IMR-90 (cell line): ENCODE measurements at regions of chr16 and their contacts with region 1.

Region 1: GRCh38 chr16:66650707-66651473 is 45.7 kb downstream of the CMTM4 start:
- DNase-seq: peak; percentile 80
- ATAC-seq: peak; percentile 98
- H3K4me3 ChIP-seq: peak overlapping the region; percentile 4; the same call in 1 of the 2 replicates
- H3K27ac ChIP-seq: no peak overlapping the region
- H3K4me1 ChIP-seq: peaks cover 3% of the 10 kb centered on the region; the same call in 1 of the 2 replicates
- H3K27me3 ChIP-seq: no peaks in the 10 kb centered on the region
- CTCF ChIP-seq: peak; percentile 93
- POLR2A ChIP-seq: no peak; the same call in 1 of the 2 replicates
- RAD21 ChIP-seq: peak; percentile 72

Region 2: DNA sequence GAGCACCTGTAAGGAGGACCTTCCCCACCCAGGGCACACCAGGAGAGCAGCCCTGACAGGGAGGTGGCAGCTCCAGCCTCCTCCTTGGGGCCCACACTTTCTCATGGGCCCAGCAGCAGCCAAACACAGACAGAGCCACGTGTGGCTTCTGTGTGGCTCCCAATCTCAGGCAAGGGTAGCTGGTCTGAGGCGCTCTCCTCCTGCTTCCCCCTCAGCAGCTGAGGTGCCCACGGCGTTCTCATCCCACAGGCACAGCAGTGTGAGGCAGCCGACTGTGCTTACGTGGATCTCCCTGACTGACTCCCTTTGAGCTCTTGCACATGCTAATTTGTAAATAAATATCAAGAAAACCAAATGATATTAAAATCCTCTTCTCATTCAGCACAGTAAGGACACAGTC is 15.5 kb before region 1 on chr16:
- CTCF ChIA-PET with region 1: interaction called, 18 read pairs
- POLR2A ChIA-PET with region 1: no interaction called
- dilution Hi-C with region 1: no loop called
- in situ Hi-C with region 1: no loop called
- intact Hi-C with region 1: no loop called
- DNase-seq: no peak
- ATAC-seq: no peak
- H3K4me3 ChIP-seq: no peak overlapping the region
- H3K27ac ChIP-seq: no peak overlapping the region
- H3K4me1 ChIP-seq: peaks cover 8% of the 10 kb centered on the region; the same call in 1 of the 2 replicates
- H3K27me3 ChIP-seq: no peaks in the 10 kb centered on the region
- CTCF ChIP-seq: no peak
- POLR2A ChIP-seq: no peak
- RAD21 ChIP-seq: no peak

Region 3: GRCh38 chr16:67120025-67120424 is 469.1 kb after region 1 on chr16:
- CTCF ChIA-PET with region 1: no interaction called
- POLR2A ChIA-PET with region 1: no interaction called
- dilution Hi-C with region 1: no loop called
- in situ Hi-C with region 1: no loop called
- intact Hi-C with region 1: no loop called
- DNase-seq: peak; percentile 18
- ATAC-seq: no peak
- H3K4me3 ChIP-seq: no peak overlapping the region
- H3K27ac ChIP-seq: no peak overlapping the region
- H3K4me1 ChIP-seq: peaks cover 5% of the 10 kb centered on the region
- H3K27me3 ChIP-seq: no peaks in the 10 kb centered on the region
- CTCF ChIP-seq: no peak
- POLR2A ChIP-seq: no peak
- RAD21 ChIP-seq: no peak